ENCODE measurements at regions of chrX and their contacts with region 1.

Region 1: GRCh38 chrX:130079824-130080406 is 30.4 kb downstream of the ELF4 start:
- DNase-seq: peak; percentile 19
- H3K4me3 Mint-ChIP-seq: no peak overlapping the region
- H3K27ac Mint-ChIP-seq: peak overlapping the region; percentile 8
- H3K4me1 Mint-ChIP-seq: peaks cover 33% of the 10 kb centered on the region
- H3K27me3 Mint-ChIP-seq: no peaks in the 10 kb centered on the region

Region 2: DNA sequence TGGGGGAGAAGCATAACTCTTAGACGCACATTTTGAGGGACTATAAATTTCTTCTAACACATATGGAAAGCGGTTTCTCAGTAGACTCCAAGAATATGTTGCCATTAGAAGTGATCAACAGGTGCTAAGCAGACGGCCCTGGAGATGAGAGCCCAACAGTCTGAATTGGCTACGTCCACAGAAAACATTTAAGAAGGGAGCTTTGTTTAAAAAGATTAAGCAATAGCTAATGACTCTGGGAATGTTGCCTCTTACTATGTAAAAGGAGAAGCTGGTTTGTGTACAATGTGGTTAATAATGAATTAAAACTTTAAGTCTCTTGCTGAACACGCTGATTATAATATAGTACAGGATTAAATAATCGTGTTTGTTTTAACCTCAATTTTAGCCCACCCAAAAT is 956.1 kb before region 1 on chrX:
- intact Hi-C with region 1: no loop called
- DNase-seq: no peak
- H3K4me3 Mint-ChIP-seq: no peak overlapping the region
- H3K27ac Mint-ChIP-seq: no peak overlapping the region
- H3K4me1 Mint-ChIP-seq: no peaks in the 10 kb centered on the region
- H3K27me3 Mint-ChIP-seq: no peaks in the 10 kb centered on the region

Region 3: DNA sequence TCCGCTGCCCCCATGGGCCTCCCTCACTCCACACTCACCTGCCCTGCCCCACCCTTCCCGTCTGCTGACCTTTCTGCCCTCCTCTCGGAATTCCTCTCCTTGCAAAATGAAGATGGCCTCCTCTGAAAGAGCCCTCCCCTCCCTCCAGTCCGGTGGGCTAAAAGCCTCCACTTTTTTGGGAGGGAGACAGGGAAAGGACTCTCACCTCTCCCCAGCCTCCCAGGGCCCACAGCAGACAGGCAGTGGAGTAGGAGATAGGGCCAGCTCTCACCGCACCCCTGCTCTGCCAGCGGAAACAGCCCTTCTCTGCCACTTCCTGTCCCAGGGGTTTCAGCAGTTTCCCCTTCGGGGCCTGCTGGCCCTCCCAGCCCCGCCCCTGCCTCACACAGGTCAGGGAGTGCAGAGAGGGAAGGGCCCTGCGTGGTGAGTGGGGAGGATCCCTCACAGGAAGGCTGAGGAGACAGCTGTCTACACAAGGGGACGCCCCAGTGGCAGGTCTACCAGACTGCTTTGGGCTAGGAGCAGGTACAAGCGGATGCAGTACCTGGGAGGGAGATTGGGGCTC is 12.1 kb after region 1 on chrX:
- intact Hi-C with region 1: loop called (anchors 1 kb)
- DNase-seq: peak; percentile 79
- H3K4me3 Mint-ChIP-seq: peak overlapping the region; percentile 83
- H3K27ac Mint-ChIP-seq: peak overlapping the region; percentile 94
- H3K4me1 Mint-ChIP-seq: peaks cover 29% of the 10 kb centered on the region
- H3K27me3 Mint-ChIP-seq: no peaks in the 10 kb centered on the region

Region 4: DNA sequence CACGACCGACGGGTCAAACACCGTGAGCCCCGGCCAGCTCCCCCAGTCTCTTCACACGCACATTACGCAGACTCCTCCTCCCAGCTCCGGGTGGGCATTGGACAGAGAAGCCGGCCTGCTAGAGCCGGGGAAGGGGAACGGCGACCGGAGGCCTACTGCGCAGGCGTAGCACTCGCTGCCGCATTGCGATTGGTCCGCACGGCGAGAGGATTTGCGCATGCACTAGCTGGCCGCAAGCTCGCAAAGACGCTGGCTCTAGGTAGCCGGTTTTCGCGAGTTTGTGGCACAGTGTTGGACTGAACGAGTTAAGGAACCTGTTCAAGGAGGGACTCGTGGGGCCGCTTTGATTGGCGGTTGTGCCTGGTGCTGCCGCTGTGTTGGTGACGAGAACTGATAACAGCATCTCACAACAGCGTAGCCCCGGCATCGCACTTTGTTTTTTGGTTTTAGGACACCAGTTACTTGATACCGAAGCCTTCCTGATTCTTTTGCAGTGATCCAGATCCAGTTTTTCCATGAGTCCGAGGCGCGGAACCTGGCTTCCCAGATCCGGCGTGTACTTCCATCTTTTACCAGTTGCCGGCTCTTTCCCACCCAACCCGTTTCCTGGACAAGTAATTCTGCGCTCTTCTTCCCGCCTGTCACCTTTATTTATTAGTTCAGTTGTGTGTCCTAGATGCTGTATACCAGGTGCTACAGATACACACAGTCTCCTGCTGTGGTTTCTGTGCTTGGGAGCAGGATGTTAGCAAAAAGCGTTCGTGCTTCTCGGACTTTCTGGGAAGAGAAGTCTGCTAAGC is 86.0 kb after region 1 on chrX and contains the start of gene AIFM1:
- intact Hi-C with region 1: loop called (anchors 1 kb)
- DNase-seq: peak; percentile 86
- H3K4me3 Mint-ChIP-seq: peak within 1 kb of the TSS; percentile 95
- H3K27ac Mint-ChIP-seq: peak within 1 kb of the TSS; percentile 98
- H3K4me1 Mint-ChIP-seq: peaks cover 20% of the 10 kb centered on the region
- H3K27me3 Mint-ChIP-seq: no peaks in the 10 kb centered on the region
- total RNA-seq, gene AIFM1: 46.0 and 50.2 TPM in 2 replicates

Region 5: GRCh38 chrX:130268500-130269170 is 188.7 kb after region 1 on chrX and contains the start of gene ZNF280C:
- intact Hi-C with region 1: loop called (anchors 1 kb)
- DNase-seq: peak; percentile 85
- H3K4me3 Mint-ChIP-seq: peak within 1 kb of the TSS; percentile 92
- H3K27ac Mint-ChIP-seq: peak within 1 kb of the TSS; percentile 91
- H3K4me1 Mint-ChIP-seq: peaks cover 19% of the 10 kb centered on the region
- H3K27me3 Mint-ChIP-seq: peaks cover 2% of the 10 kb centered on the region
- total RNA-seq, gene ZNF280C: 7.4 and 7.6 TPM in 2 replicates

Region 6: DNA sequence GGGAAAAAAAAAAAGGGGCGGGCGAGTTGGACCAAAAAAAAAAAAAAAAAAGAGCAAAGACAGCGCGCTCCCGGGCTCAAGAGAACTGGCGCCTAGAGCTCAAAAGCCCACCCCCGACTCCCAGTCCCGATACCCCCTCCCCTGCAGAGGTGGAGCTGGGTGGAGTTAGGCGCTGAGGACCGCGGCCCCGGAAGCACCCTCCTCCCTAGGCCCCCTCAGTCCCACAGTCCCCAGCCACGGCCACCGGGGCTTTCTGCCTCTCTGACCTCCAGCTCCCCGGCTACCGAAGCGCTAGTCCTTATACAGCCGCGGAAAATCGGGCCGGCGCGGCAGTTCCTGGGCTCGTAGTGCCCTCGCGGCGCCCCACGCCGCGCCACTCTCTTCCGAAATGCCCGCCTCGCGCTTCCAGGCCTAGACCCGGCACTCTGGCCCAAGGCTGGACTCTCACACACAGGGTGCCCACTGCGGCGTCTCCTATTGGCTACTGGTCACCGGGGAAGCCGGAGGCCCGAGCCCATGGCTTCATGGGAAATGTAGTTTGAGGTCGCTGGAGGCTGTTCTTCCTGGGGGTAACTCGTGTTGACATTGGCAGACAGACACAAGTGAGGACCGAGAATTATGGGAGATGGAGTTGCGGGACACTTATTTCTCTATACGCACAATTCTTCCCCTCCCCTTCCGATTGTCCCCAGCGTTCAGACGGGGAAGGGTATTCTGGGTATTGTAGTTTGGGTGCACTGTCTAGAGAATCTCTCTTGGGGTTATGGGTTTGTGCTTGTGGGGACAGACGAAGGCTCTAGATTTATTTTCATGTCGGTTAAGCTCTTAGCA is 823.1 kb after region 1 on chrX and contains the start of gene ENOX2:
- intact Hi-C with region 1: loop called (anchors 10 kb)
- DNase-seq: peak; percentile 83
- H3K4me3 Mint-ChIP-seq: no peak within 1 kb of the TSS
- H3K27ac Mint-ChIP-seq: peak within 1 kb of the TSS; percentile 83
- H3K4me1 Mint-ChIP-seq: peaks cover 9% of the 10 kb centered on the region
- H3K27me3 Mint-ChIP-seq: peaks cover 5% of the 10 kb centered on the region
- total RNA-seq, gene ENOX2: 15.6 and 20.5 TPM in 2 replicates

Measured in activated T-helper 1 cell treated with anti-CD3 and anti-CD28 coated beads, Interleukin-12 subunit alpha, Interleukin-12 subunit beta, Interleukin-2, Interleukin-4 antibody, amounts not matched to agents 30 ng/mL and 10 ng/mL and 1 ng/mL, durations not matched to agents 14 hours and 24 hours and 36 hours (primary cell).